AG04450 (cell line): ENCODE measurements at regions of chr11 and their contacts with region 1.

Region 1: GRCh38 chr11:6377902-6378639 is 12.2 kb upstream of the SMPD1 start:
- DNase-seq: no peak
- H3K4me3 ChIP-seq: no peak overlapping the region
- H3K27ac ChIP-seq: no peak overlapping the region
- H3K27me3 ChIP-seq: peaks cover 2% of the 10 kb centered on the region
- CTCF ChIP-seq: no peak

Region 2: DNA sequence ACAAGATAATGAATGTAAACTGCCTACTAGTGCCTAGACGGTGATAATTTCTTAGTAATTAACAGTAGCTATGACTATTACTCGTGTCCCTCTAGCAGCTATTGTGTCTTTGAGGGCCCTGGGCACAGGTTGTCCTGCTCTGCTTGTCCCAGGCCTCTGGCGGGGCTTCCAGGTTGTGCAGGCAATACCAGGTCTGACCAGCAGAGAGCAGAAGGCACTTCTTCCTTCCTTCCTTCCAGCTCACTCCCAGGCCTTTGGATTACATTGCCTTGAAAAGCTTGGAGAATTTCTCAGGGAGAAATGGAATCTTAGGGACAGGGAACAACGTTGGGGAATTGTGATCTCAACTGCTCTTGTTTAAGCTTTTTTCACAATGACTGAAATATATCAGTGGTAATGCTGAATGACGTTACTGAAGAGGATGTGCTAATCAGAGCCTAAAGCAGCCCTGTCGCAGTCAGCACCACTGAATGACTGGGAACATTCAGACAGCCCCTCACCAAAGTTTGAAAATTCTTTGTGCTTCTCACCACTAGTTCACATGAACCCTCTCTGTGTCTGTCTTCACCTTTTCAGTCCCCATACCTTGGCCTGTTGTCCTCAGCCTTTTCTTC is 126.8 kb before region 1 on chr11:
- CTCF ChIA-PET with region 1: interaction called, 13 read pairs
- POLR2A ChIA-PET with region 1: no interaction called
- DNase-seq: peak; percentile 32
- H3K4me3 ChIP-seq: no peak overlapping the region
- H3K27ac ChIP-seq: no peak overlapping the region
- H3K27me3 ChIP-seq: peaks cover 7% of the 10 kb centered on the region
- CTCF ChIP-seq: peak; percentile 92

Region 3: DNA sequence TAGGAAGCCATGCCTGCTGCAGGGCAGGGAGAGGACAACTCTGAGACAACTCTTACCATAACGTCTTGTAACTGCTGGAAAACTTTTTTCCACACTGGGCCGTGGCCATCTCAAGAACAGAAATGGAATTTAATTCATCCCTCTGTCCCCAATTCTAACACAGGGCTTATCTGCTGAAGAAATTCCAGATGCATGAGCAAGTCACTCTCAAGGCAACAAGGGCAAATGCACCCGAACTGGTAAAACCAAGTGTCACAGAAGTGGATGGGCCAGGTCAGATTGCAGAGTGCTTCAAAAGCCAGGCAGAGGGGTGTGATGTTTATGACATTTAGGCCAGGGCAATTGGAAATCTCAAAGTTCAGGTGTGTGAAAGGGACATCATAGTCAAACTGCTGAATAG is 19.6 kb after region 1 on chr11:
- CTCF ChIA-PET with region 1: interaction called, 19 read pairs
- POLR2A ChIA-PET with region 1: no interaction called
- DNase-seq: no peak
- H3K4me3 ChIP-seq: no peak overlapping the region
- H3K27ac ChIP-seq: no peak overlapping the region
- H3K27me3 ChIP-seq: no peaks in the 10 kb centered on the region
- CTCF ChIP-seq: no peak

Region 4: DNA sequence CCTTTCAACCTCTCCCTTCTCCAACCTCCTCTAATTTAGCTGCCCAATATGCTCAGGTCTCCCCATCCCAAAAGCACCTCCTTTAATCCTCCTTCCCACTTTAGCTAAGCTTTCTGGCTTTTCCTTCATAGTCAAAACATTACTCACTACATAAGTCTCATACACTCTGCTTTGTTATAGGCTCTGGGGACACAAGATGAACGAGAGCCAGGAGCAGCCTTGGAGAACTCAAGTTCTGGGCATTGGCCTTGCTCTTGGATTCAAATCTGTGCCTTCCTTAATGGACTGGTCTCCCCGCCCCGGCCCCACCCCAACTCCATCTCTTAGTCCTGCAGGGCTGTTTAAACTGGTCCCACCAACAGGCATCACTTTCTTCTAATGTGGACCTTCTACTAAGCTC is 74.1 kb after region 1 on chr11:
- CTCF ChIA-PET with region 1: interaction called, 604 read pairs
- POLR2A ChIA-PET with region 1: no interaction called
- DNase-seq: no peak
- H3K4me3 ChIP-seq: no peak overlapping the region
- H3K27ac ChIP-seq: no peak overlapping the region
- H3K27me3 ChIP-seq: no peaks in the 10 kb centered on the region
- CTCF ChIP-seq: no peak

Region 5: DNA sequence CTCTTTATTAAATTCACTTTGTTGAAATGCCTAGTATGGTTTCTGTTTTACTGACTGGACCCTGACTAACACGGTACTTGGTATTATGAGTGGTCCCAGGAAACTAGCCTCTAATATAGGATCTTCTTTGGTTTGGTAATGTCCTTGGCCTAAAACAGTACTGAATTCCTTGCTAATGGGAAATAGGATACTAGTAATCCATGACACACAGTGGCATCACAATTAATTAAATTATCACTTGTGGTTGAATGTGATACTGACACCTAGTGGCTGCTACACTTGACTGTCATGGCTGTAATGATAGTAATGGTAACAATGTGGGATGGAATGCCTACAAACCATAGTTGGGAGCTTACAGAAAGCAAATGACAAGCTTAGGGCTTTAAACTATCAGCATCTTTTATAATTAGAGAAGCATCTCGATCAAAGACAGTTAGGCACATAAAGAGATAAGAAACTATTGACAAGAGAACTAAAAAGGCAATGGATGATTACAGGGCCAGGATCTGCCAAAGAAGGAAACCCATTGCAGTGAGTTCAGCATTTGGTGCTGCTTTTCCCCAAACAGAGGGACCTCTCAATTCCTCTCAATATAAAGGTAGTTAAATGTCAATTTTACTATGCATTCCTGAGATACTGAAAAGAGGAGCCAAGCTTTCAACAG is 127.6 kb after region 1 on chr11:
- CTCF ChIA-PET with region 1: interaction called, 132 read pairs
- POLR2A ChIA-PET with region 1: no interaction called
- DNase-seq: peak; percentile 16
- H3K4me3 ChIP-seq: no peak overlapping the region
- H3K27ac ChIP-seq: no peak overlapping the region
- H3K27me3 ChIP-seq: no peaks in the 10 kb centered on the region
- CTCF ChIP-seq: peak; percentile 60

Region 6: DNA sequence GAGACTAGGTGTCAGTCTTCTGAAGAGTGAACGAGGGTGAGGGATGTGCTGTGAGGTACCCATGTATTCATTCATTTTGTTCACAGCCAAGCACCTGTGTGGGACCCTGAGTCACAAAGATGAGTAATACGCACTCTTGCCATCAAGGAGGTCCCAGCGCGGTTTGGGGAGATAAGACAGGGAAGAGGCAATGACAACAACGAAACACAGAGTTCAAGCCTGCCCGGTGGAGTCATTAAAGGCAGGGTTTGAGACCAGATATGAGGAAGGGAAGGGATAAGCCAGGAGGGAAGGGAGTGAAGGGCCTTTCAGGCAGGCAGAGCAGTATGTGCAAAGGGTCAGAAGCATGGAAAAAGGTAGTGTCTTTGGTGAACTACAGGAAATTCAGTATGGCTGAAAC is 272.9 kb after region 1 on chr11:
- CTCF ChIA-PET with region 1: no interaction called
- POLR2A ChIA-PET with region 1: no interaction called
- DNase-seq: no peak
- H3K4me3 ChIP-seq: no peak overlapping the region
- H3K27ac ChIP-seq: no peak overlapping the region
- H3K27me3 ChIP-seq: peaks cover 16% of the 10 kb centered on the region
- CTCF ChIP-seq: no peak

Region 7: GRCh38 chr11:6682936-6683861 is 305.1 kb after region 1 on chr11 and contains the start of gene MRPL17:
- CTCF ChIA-PET with region 1: interaction called, 21 read pairs
- POLR2A ChIA-PET with region 1: no interaction called
- DNase-seq: peak; percentile 98
- H3K4me3 ChIP-seq: peak within 1 kb of the TSS; percentile 100
- H3K27ac ChIP-seq: peak within 1 kb of the TSS; percentile 90
- H3K27me3 ChIP-seq: no peaks in the 10 kb centered on the region
- CTCF ChIP-seq: peak; percentile 85
- polyA plus RNA-seq, gene MRPL17: 63.3 and 69.1 TPM in 2 replicates